ENCODE measurements at regions of chr5 and their contacts with region 1.

Region 1: DNA sequence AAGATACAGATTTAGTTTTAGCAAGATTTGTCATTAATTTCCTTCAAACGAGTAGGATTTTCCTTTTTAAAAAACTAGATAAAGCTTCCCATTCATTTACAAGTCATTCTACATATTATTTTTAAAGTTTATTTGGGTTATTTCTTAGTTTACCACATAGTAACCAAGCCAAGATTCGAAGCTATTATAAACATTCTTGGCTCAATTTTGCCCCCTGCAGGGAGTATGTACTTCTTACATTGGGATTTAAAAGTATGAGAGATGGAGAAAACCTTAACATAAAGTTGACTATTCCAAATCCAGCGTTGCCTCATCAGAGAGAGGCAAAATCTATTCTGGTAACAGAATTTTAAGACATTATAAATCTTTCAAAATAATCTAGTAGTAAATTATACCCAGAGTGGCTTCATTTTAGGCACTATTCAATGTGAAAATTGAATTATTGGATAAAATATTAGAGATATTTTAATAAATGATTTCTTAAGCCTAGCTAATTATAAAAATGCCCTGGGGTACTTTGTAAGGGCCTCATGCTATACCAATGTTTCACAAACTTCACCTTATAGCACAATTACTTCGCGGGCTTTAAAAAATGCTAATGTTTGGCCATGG is 39.1 kb downstream of the FBN2 start:
- DNase-seq: no peak
- H3K4me3 Mint-ChIP-seq: no peak overlapping the region
- H3K27ac Mint-ChIP-seq: no peak overlapping the region
- H3K4me1 Mint-ChIP-seq: no peaks in the 10 kb centered on the region
- H3K27me3 Mint-ChIP-seq: no peaks in the 10 kb centered on the region

Region 2: DNA sequence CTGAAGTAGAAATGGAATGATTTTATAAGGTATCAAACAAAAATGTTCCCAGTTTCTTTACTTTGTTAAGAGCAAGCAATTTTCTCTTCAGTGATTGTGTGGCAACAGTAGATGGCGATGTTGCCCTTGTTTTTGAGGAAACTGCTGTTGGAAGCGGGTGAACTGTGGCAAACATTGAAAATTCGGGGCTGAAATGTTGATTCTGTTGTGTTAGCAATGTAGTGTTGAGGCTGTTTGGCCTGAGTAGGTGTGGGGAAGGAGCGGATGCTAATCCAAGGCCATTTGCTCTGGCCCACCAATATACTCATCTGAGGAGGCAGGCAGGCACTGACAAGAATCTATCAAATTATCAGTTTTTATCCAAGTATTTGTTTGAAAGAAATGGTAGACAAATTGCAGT is 285.6 kb before region 1 on chr5:
- intact Hi-C with region 1: loop called (anchors 2 kb)
- DNase-seq: no peak
- H3K4me3 Mint-ChIP-seq: no peak overlapping the region
- H3K27ac Mint-ChIP-seq: no peak overlapping the region
- H3K4me1 Mint-ChIP-seq: no peaks in the 10 kb centered on the region
- H3K27me3 Mint-ChIP-seq: peaks cover 2% of the 10 kb centered on the region

Region 3: DNA sequence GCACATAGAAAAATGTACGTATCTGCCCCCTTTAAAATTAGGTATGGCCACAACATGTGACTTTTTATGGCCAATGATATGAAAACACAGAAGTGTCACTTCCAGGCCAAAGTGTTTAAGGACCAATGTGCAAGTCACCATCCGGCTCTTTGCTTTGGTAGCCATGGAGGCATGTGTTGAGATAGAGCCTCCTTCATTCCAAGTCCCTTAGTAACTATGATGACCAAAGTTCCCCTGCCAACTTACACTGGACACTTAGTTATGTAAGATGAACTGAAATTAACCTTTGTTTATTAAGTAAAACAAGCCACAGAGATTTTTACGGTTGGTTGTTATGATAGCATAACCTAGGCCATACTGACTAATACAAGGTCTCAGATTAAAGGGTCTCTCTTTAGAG is 11.9 kb before region 1 on chr5:
- intact Hi-C with region 1: no loop called
- DNase-seq: no peak
- H3K4me3 Mint-ChIP-seq: no peak overlapping the region
- H3K27ac Mint-ChIP-seq: no peak overlapping the region
- H3K4me1 Mint-ChIP-seq: no peaks in the 10 kb centered on the region
- H3K27me3 Mint-ChIP-seq: no peaks in the 10 kb centered on the region